Endothelial cell of umbilical vein (primary cell): ENCODE measurements at regions of chr4 and their contacts with region 1.

Region 1: GRCh38 chr4:30726090-30726675 is 6.0 kb downstream of the PCDH7 start:
- DNase-seq: peak; percentile 80
- H3K4me3 ChIP-seq: peak overlapping the region; percentile 4 to 63 (median 29)
- H3K27ac ChIP-seq: peak overlapping the region; percentile 48
- H3K4me1 ChIP-seq: peaks cover 66% of the 10 kb centered on the region
- H3K27me3 ChIP-seq: no peaks in the 10 kb centered on the region
- CTCF ChIP-seq: no peak
- POLR2A ChIP-seq: no peak

Region 2: GRCh38 chr4:29900336-29900735 is 825.8 kb before region 1 on chr4:
- CTCF ChIA-PET with region 1: no interaction called
- POLR2A ChIA-PET with region 1: no interaction called
- dilution Hi-C with region 1: no loop called
- intact Hi-C with region 1: no loop called
- DNase-seq: no peak
- H3K4me3 ChIP-seq: no peak overlapping the region
- H3K27ac ChIP-seq: no peak overlapping the region
- H3K4me1 ChIP-seq: no peaks in the 10 kb centered on the region
- H3K27me3 ChIP-seq: no peaks in the 10 kb centered on the region
- CTCF ChIP-seq: no peak
- POLR2A ChIP-seq: no peak

Region 3: GRCh38 chr4:30386266-30386895 is 339.8 kb before region 1 on chr4:
- CTCF ChIA-PET with region 1: no interaction called
- POLR2A ChIA-PET with region 1: no interaction called
- dilution Hi-C with region 1: no loop called
- intact Hi-C with region 1: no loop called
- DNase-seq: peak; percentile 32
- H3K4me3 ChIP-seq: no peak overlapping the region
- H3K27ac ChIP-seq: no peak overlapping the region
- H3K4me1 ChIP-seq: peaks cover 11% of the 10 kb centered on the region
- H3K27me3 ChIP-seq: no peaks in the 10 kb centered on the region
- CTCF ChIP-seq: no peak
- POLR2A ChIP-seq: no peak

Region 4: DNA sequence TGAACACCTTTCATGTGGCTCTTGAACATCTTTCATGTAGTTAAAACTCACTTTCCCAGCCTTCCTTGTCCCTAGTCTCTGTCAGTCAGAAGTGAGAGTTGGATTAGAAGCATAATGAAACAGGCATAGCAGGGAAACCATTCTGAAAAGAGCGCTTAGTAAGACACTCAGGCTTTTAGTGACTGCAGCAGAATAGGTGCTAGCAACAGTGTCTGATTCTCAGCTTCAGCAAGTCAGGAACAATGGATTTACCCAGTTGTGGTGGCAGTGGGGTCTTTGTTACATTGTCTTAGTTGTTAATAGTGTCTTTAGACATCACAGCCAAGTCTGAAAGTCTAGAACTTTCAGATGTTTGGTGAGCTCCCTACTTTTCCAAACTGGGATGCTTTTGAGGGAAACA is 183.1 kb before region 1 on chr4:
- CTCF ChIA-PET with region 1: no interaction called
- POLR2A ChIA-PET with region 1: no interaction called
- dilution Hi-C with region 1: no loop called
- intact Hi-C with region 1: no loop called
- DNase-seq: no peak
- H3K4me3 ChIP-seq: no peak overlapping the region
- H3K27ac ChIP-seq: no peak overlapping the region
- H3K4me1 ChIP-seq: peaks cover 1% of the 10 kb centered on the region
- H3K27me3 ChIP-seq: no peaks in the 10 kb centered on the region
- CTCF ChIP-seq: no peak
- POLR2A ChIP-seq: no peak

Region 5: GRCh38 chr4:30744957-30745640 is 18.9 kb after region 1 on chr4:
- CTCF ChIA-PET with region 1: interaction called, 4 read pairs
- POLR2A ChIA-PET with region 1: no interaction called
- dilution Hi-C with region 1: no loop called
- intact Hi-C with region 1: loop called (anchors 1 kb)
- DNase-seq: peak; percentile 51
- H3K4me3 ChIP-seq: no peak overlapping the region
- H3K27ac ChIP-seq: no peak overlapping the region
- H3K4me1 ChIP-seq: no peaks in the 10 kb centered on the region
- H3K27me3 ChIP-seq: no peaks in the 10 kb centered on the region
- CTCF ChIP-seq: no peak
- POLR2A ChIP-seq: no peak